Upper lobe of right lung (tissue), 1 donor: ENCODE measurements at regions of chr7 and their contacts with region 1.

Region 1: GRCh38 chr7:77667459-77668086 is 28.7 kb upstream of the RSBN1L start:
- DNase-seq: no peak
- ATAC-seq: no peak
- H3K4me3 ChIP-seq: no peak overlapping the region
- H3K27ac ChIP-seq: no peak overlapping the region
- H3K4me1 ChIP-seq: peaks cover 4% of the 10 kb centered on the region
- H3K27me3 ChIP-seq: no peaks in the 10 kb centered on the region
- CTCF ChIP-seq: no peak

Region 2: GRCh38 chr7:77759294-77759889 is 91.8 kb after region 1 on chr7:
- intact Hi-C with region 1: loop called (anchors 10 kb)
- DNase-seq: no peak
- ATAC-seq: peak; percentile 91
- H3K4me3 ChIP-seq: no peak overlapping the region
- H3K27ac ChIP-seq: peak overlapping the region; percentile 18
- H3K4me1 ChIP-seq: peaks cover 9% of the 10 kb centered on the region
- H3K27me3 ChIP-seq: no peaks in the 10 kb centered on the region
- CTCF ChIP-seq: peak; percentile 82